ENCODE measurements at regions of chrX and their contacts with region 1.

Region 1: DNA sequence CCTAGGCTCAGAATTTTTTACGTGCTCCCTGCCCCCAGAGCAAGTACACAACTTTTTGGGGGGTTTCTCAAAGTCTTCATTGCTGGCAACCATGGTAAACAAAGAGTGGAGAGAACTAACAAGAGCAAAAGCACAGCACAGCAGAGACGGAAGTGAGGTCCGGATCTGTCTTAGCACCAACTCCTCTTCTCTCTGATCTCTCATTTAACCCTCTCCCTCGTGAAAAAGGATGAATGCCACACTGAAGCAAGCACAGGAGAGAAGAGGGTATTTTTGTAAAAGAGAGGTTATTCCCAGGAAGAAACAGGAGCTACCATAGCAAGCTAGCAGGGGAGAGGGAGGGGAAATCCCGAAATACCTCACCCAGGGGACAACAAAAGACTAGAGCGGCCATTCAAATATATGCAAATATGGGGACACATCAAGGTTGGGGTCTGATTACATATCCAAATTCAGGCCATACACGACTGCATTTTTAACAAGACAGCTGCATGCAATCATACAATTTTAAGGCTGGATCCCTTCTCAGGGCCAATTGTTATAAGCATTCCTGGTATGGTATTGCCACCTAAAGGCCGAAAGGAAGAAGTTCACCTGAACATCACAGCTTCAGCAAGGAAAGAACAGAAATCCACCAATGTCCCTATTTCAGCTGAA is 46.6 kb downstream of the CD40LG start:
- DNase-seq: peak; percentile 36
- ATAC-seq: peak; percentile 71
- H3K4me3 Mint-ChIP-seq: peak overlapping the region; percentile 68
- H3K27ac Mint-ChIP-seq: peak overlapping the region; percentile 98
- H3K4me1 Mint-ChIP-seq: peaks cover 75% of the 10 kb centered on the region
- H3K27me3 Mint-ChIP-seq: no peaks in the 10 kb centered on the region

Region 2: DNA sequence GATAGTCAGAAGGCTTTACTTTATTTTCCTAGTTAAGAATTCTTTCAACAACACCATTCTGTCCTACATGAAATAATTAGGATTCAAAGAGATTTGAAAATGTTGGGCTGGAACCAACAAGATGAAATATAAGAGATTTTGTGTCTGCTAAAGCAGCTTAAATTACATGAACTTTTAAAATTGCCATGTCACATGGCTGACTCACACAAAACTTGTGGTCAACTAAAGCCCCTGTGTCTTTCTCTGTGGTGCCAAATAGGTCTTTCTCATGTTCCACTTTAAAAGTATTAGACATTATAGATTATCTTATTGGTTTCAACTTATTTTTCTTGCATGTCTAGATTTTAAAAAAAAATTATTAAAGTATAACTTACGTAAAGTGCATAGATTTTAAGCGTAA is 608.0 kb before region 1 on chrX:
- CTCF ChIA-PET with region 1: no interaction called
- POLR2A ChIA-PET with region 1: no interaction called
- intact Hi-C with region 1: no loop called
- DNase-seq: no peak
- ATAC-seq: no peak
- H3K4me3 Mint-ChIP-seq: no peak overlapping the region
- H3K27ac Mint-ChIP-seq: no peak overlapping the region
- H3K4me1 Mint-ChIP-seq: no peaks in the 10 kb centered on the region
- H3K27me3 Mint-ChIP-seq: no peaks in the 10 kb centered on the region

Region 3: DNA sequence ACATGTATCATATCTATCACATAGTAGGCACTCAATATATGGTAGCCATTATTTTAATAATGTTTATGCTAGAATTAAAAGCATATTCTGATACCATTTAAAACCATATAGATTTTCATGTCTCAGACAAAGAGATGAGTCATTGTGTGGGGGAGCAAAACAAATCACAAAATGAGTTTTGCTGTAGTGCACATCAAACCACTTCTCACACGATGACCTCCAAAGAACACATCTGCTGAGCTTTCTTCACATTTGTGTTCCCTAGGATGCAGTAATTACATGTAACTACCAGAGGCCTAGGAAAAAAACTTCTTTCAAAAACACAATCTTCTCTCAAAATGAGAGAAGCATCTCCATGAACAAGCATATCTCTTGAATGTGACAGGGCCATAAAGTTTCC is 262.9 kb before region 1 on chrX:
- CTCF ChIA-PET with region 1: no interaction called
- POLR2A ChIA-PET with region 1: no interaction called
- intact Hi-C with region 1: loop called in 1 of 2 experiments (anchors 10 kb)
- DNase-seq: peak; percentile 6
- ATAC-seq: peak; percentile 83
- H3K4me3 Mint-ChIP-seq: no peak overlapping the region
- H3K27ac Mint-ChIP-seq: no peak overlapping the region
- H3K4me1 Mint-ChIP-seq: peaks cover 8% of the 10 kb centered on the region
- H3K27me3 Mint-ChIP-seq: no peaks in the 10 kb centered on the region

Region 4: DNA sequence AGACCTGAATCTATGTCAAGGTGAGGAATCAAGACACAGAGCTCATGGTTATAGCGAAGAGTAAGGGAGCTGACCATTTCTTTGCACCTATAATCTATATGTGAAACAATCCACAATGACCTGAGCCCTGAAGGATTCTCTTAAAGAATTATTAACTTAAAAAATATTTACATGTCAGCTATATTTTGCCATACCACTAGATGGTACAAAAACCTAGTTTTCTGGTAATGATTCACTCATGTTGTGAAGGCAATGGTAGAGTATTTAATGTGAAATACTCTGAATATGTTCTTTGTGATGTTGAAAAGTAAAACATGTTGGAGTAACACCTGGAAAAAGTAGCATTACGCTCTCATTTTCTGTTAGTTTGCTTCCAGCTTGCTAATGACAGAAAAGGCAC is 122.5 kb before region 1 on chrX:
- CTCF ChIA-PET with region 1: interaction called, 27 read pairs
- POLR2A ChIA-PET with region 1: no interaction called
- intact Hi-C with region 1: loop called (anchors 2 kb)
- DNase-seq: no peak
- ATAC-seq: peak; percentile 39
- H3K4me3 Mint-ChIP-seq: no peak overlapping the region
- H3K27ac Mint-ChIP-seq: no peak overlapping the region
- H3K4me1 Mint-ChIP-seq: peaks cover 20% of the 10 kb centered on the region
- H3K27me3 Mint-ChIP-seq: no peaks in the 10 kb centered on the region

Region 5: DNA sequence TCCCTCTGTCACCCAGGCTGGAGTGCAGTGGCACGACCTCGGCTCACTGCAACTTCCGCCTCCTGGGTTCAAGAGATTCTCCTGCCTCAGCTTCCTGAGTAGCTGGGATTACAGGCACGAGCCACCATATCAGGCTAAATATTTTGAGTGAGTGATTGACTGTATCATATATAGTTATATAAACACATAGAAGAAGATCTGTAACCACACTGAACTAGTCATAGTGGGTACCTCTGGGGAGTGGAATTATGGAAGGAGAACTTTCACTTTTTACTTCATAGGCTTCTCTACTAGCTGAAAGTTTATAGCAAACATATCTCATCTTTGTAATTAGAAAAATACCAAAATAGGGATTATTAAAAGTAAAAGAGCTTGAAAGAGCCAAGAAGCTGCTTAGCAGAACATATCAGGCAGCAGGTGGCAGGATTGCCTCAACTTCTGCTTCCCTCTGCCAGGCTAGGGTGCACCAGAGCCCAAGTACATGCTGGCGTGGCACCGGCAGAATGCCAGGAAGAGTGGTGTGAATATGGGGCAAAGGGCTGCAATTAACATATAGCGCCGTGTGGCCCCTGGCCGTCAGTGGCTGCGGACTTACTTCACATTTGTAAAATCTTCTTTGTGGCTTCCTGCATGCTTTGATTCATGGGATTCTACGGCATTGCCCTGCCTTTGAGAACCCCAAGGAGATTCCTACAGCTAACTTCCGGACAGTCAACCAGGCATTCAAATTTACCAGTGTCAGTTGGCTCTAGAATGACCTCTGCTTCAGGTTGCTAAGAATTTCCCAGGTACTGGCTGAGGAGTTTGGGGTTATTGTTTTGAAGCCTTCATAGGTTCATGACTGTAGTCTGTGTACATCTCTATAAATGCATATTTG is 86.0 kb before region 1 on chrX:
- CTCF ChIA-PET with region 1: interaction called, 32 read pairs
- POLR2A ChIA-PET with region 1: interaction called, 4 read pairs
- intact Hi-C with region 1: loop called (anchors 1 kb)
- DNase-seq: peak; percentile 79
- ATAC-seq: peak; percentile 84
- H3K4me3 Mint-ChIP-seq: peak overlapping the region; percentile 50
- H3K27ac Mint-ChIP-seq: peak overlapping the region; percentile 88
- H3K4me1 Mint-ChIP-seq: peaks cover 56% of the 10 kb centered on the region
- H3K27me3 Mint-ChIP-seq: no peaks in the 10 kb centered on the region

Region 6: DNA sequence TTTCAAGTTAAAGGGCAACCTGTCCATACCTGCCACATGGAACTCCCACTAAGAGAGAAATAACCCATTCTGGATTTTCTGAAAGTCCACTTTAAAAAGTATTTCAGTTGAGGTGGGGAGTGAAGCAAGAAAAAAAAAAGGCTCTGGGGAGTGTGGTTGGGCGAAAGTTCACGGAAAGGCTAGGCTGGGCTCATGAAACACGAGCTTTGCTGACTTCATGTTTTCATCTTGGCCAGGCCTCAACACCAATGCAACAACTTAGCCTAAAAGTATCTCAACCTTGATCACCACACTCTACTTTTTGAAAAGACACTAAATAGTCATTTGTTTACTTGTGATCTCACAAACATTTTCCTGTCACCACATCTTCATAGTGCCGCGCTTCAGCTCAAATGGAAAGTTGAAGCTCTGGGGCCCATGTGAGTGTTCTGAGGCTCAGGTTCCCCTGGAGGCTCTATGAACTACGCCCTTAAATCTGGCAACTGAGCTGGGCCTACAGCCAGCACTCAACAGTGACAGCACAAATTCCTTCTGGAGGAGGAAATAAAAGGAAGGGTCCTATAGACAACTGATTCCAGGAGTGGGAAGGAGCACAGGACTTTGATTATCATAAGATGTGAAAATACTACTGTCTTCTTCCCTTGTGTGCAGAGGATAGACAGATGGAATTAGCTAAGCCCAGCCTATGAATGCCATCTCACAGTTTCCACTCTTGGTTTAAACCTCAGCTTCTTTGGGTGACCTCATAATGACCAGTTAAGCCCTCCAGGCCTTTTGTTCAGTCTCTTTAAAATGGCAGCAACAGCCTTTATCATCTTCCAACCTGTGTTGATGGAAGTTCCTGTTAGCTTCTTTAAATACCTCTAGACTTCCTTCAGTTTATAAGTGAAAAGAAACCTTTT is 41.5 kb before region 1 on chrX:
- CTCF ChIA-PET with region 1: interaction called, 11 read pairs
- POLR2A ChIA-PET with region 1: interaction called, 6 read pairs
- intact Hi-C with region 1: loop called (anchors 2 kb)
- DNase-seq: peak; percentile 61
- ATAC-seq: peak; percentile 56
- H3K4me3 Mint-ChIP-seq: peak overlapping the region; percentile 96
- H3K27ac Mint-ChIP-seq: peak overlapping the region; percentile 100
- H3K4me1 Mint-ChIP-seq: peaks cover 43% of the 10 kb centered on the region
- H3K27me3 Mint-ChIP-seq: no peaks in the 10 kb centered on the region

Region 7: GRCh38 chrX:136711147-136711546 is 16.6 kb after region 1 on chrX:
- CTCF ChIA-PET with region 1: interaction called, 53 read pairs
- POLR2A ChIA-PET with region 1: no interaction called
- intact Hi-C with region 1: no loop called
- DNase-seq: peak; percentile 33
- ATAC-seq: peak; percentile 20
- H3K4me3 Mint-ChIP-seq: no peak overlapping the region
- H3K27ac Mint-ChIP-seq: peak overlapping the region; percentile 92
- H3K4me1 Mint-ChIP-seq: peaks cover 74% of the 10 kb centered on the region
- H3K27me3 Mint-ChIP-seq: no peaks in the 10 kb centered on the region